ENCODE measurements at regions of chrX and their contacts with region 1.

Region 1: DNA sequence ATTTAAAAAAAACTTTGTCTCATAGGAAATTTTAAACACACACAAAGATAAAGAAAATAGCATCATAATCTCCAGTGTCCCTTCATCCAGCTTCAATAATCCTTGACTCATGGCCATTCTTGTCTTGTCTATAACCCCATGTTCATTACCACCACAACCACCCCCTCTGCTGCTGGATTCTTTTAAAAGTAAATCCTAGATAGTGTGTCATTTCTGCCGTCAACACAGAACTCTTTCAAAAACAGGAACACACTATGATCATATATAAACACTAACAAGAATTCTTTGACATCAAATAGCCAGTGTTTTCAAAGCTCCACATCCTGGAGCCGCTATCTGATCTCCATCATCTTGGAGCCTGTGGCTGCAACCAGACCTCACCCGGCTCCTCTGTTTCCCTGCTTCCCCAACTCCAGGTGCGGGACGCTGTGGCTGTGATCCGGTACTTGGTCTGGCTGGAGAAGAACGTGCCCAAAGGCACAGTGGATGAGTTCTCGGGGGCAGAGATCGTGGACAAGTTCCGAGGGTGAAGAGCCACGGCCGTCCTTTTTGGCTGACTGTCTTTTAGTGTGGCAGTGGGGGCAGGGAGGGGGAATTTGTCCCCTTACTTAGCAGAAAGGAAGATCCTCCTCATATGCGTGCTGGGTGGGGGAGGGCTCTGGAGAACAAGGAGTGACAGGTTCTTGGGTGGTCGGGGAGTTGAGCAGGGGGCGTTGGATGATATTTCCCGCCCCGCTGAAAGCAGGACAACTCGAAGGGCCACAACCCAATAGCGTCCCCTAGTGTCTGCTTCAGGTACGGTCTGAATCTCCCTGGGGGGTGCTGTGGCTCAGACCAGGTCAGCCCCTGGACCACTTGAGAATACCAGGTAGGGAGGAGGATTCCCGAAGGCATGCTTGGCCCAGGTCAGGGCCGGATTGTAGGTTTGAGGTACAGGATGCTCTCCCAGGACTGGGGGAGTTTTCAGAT is 15.6 kb downstream of the XPNPEP2 start:
- DNase-seq: peak; percentile 46
- H3K4me3 Mint-ChIP-seq: no peak overlapping the region
- H3K27ac Mint-ChIP-seq: no peak overlapping the region
- H3K4me1 Mint-ChIP-seq: peaks cover 39% of the 10 kb centered on the region
- H3K27me3 Mint-ChIP-seq: no peaks in the 10 kb centered on the region

Region 2: GRCh38 chrX:129823115-129823514 is 68.8 kb after region 1 on chrX:
- CTCF ChIA-PET with region 1: interaction called, 17 read pairs
- POLR2A ChIA-PET with region 1: no interaction called
- intact Hi-C with region 1: loop called (anchors 1 kb)
- DNase-seq: peak; percentile 46
- H3K4me3 Mint-ChIP-seq: no peak overlapping the region
- H3K27ac Mint-ChIP-seq: peak overlapping the region; percentile 81
- H3K4me1 Mint-ChIP-seq: peaks cover 16% of the 10 kb centered on the region
- H3K27me3 Mint-ChIP-seq: no peaks in the 10 kb centered on the region

Region 3: DNA sequence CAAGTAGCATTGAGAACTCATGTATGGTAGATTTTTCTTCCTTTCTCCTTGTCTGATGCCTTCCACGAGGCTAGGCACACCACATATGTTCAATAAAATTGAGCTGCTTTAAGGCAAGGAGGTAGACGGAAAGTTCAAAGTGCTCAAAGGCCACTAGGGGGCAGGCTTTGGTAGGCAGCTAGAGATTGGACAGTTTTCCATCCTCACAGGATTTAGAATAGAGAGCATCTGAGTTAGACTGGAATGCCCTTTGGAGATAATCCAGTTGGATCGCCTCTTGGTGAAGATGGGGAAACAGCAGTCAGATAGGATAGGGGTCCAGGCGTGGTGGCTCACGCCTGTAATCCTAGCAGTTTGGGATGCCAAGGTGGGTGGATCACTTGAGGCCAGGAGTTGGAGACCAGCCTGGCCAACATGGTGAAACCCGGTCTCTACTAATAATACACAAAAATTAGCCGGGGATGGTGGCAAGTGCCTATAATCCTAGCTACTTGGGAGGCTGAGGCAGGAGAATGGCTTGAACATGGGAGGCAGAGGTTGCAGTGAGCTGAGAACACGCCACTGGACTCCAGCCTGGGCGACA is 325.6 kb after region 1 on chrX:
- CTCF ChIA-PET with region 1: no interaction called
- POLR2A ChIA-PET with region 1: no interaction called
- intact Hi-C with region 1: no loop called
- DNase-seq: peak; percentile 67
- H3K4me3 Mint-ChIP-seq: no peak overlapping the region
- H3K27ac Mint-ChIP-seq: peak overlapping the region; percentile 50
- H3K4me1 Mint-ChIP-seq: peaks cover 42% of the 10 kb centered on the region
- H3K27me3 Mint-ChIP-seq: no peaks in the 10 kb centered on the region